ENCODE measurements at regions of chr2 and their contacts with region 1.

Region 1: DNA sequence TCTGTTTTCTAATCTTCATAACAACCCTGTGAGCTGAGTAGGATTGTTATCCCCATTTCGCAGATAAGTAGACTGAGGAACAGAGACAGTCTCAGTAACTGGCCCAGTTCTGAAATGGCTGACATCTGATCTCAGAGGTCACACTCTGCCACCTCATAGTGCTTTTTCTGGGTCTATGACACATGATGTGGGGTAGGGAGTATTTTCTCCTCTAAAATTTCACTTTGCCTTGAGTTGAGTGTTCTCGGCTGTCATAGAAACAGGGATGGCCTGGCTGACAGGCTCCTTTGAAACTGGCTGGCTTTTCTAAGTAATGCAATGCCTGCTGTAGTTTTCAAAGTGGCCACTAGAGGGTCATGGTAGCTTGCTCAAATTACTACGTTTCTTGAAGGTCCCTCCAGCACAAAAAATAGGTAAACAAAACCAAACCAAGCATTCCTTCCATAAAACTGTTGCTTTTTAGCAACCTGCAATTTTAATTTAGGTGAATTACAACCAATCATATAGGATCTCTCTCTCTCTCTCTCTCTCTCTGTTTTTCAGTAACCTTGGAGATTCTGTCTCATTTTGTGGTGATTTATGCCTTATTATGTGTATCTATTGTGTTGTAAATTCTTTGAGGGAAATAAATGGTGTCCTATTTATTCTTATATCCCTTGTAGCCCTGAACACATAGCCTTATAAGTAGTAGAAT is 84.2 kb upstream of the TTN start:
- H3K4me3 Mint-ChIP-seq: no peak overlapping the region
- H3K27ac Mint-ChIP-seq: peak overlapping the region; percentile 53
- H3K4me1 Mint-ChIP-seq: peaks cover 16% of the 10 kb centered on the region
- H3K27me3 Mint-ChIP-seq: peaks cover 1% of the 10 kb centered on the region

Region 2: GRCh38 chr2:179129574-179130238 is 238.3 kb after region 1 on chr2:
- intact Hi-C with region 1: loop called (anchors 10 kb)
- H3K4me3 Mint-ChIP-seq: no peak overlapping the region
- H3K27ac Mint-ChIP-seq: no peak overlapping the region
- H3K4me1 Mint-ChIP-seq: no peaks in the 10 kb centered on the region
- H3K27me3 Mint-ChIP-seq: no peaks in the 10 kb centered on the region

Measured in dendritic cell treated with granulocyte-macrophage colony-stimulating factor and Interleukin-4, amounts not matched to agents 40 ng/mL and 50 ng/mL, for 4 days (primary cell).